HEK293 (cell line): ENCODE measurements at regions of chr2 and their contacts with region 1.

Region 1: DNA sequence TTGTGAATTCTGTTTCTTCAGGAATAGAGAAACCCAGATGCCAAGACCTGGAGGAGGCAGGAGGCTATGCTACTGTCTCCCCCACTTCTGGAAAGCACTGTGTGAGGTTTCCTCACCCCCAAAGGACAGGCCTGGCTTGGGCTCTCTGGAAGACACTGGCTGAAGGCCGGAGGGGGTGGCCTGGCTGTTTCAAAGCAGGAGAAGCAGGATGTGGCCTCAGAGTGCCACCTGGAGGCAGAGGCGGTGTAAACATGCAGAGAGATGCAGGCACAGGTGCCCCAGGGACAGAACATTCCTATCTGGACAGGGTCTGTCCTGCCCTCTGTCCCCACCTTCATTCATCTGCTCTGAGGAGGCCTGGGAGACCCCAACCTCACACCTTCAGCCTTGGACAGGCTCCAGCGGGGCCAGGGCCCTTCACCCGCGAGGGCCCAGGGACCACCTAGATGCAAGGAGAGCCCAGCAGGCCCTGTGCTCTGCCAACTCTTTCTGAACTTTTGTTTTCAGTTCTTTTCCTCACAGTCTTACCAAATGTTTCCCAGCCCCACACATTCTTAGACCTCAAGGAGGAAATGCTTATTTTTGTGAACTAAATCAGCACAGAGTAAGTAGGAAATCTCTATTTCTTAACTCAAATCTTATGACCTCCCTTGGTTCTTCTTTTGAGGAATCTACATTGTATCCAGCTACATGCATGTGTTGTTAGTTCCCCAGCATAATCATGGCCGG is 79.2 kb downstream of the LONRF2 start:
- H3K4me3 ChIP-seq: no peak overlapping the region
- H3K27ac ChIP-seq: no peak overlapping the region
- H3K4me1 ChIP-seq: no peaks in the 10 kb centered on the region
- CTCF ChIP-seq: peak; percentile 78

Region 2: DNA sequence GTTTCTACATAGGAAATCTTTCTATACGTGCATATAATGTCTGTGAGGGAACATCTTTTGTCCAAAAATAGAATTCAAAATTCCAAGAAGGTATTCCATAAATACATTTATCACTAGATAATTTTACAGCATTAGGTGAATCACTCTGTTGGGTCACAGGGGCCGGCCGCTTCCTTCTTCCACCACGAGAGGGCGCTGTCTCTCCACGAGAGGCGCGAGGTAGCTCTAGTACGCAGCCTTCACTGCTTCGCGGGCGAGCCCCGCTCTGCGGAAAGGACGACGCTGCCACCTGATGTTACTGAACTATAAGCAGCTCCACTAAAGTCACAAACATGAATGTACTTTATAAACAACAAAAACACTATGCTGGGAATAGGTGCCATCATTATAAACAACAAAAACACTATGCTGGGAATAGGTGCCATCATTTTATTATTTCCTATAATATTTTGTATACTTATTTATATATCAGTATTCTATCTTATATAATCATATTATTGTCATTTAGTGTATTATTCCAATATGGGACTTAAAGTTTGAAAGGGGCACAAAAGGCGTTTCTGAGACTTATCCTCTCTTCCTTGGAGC is 683.9 kb before region 1 on chr2:
- CTCF ChIA-PET with region 1: interaction called, 12 read pairs
- POLR2A ChIA-PET with region 1: no interaction called
- H3K4me3 ChIP-seq: no peak overlapping the region
- H3K27ac ChIP-seq: no peak overlapping the region
- H3K4me1 ChIP-seq: no peaks in the 10 kb centered on the region
- CTCF ChIP-seq: peak; percentile 83

Region 3: GRCh38 chr2:99818842-99819241 is 424.2 kb before region 1 on chr2:
- CTCF ChIA-PET with region 1: interaction called, 15 read pairs
- POLR2A ChIA-PET with region 1: no interaction called
- H3K4me3 ChIP-seq: no peak overlapping the region
- H3K27ac ChIP-seq: no peak overlapping the region
- H3K4me1 ChIP-seq: no peaks in the 10 kb centered on the region
- CTCF ChIP-seq: no peak